Activated CD8-positive, alpha-beta T cell treated with anti-CD3 and anti-CD28 coated beads for 36 hours (primary cell): ENCODE measurements at regions of chr5 and their contacts with region 1.

Region 1: DNA sequence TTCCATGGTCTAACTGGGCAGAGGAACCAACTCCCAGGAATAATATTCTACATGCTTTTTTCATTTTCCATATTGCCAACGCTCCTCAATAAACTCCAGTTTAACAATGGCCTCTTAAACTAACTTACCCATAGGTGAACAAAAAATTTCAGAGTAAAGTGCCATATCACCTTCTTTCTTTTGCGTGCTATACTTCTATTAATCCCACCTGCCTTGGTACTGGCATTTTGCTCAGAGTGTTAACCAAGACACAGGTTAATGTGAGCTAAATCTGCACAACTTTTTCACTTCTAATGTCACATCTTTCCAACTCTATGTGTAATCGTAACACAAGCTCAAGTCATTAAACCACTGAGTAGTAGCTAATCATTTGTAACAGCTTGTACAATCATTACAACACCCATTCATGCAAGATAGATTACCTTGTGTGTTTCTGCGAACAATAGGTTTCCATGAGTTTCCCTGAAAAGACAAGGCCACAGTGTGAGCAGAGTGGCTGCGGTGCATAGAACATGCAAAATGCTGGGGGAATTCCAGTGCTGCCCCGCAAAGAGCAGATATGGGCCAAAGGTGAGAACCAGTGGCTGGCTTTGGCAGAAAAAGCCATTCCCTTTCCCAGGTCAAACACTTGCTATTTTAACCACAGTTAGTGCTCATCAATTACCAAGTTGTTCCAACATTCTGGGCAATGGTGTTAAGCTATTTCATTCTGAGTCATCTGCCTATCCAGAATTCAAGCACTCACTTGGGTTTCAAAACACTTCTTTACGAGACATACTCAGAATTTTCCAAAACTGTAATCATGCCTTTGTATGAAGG is 42.8 kb downstream of the TIMD4 start:
- DNase-seq: peak; percentile 90
- ATAC-seq: peak; percentile 77
- H3K4me3 Mint-ChIP-seq: peak overlapping the region; percentile 63
- H3K27ac Mint-ChIP-seq: peak overlapping the region; percentile 88
- H3K4me1 Mint-ChIP-seq: peaks cover 58% of the 10 kb centered on the region
- H3K27me3 Mint-ChIP-seq: no peaks in the 10 kb centered on the region
- CTCF ChIP-seq: no peak

Region 2: GRCh38 chr5:157108976-157109375 is 188.7 kb after region 1 on chr5 and contains the start of gene HAVCR2:
- CTCF ChIA-PET with region 1: no interaction called
- POLR2A ChIA-PET with region 1: no interaction called
- intact Hi-C with region 1: loop called (anchors 5 kb)
- DNase-seq: peak; percentile 88
- ATAC-seq: peak; percentile 91
- H3K4me3 Mint-ChIP-seq: peak within 1 kb of the TSS; percentile 78
- H3K27ac Mint-ChIP-seq: peak within 1 kb of the TSS; percentile 94
- H3K4me1 Mint-ChIP-seq: peaks cover 55% of the 10 kb centered on the region
- H3K27me3 Mint-ChIP-seq: no peaks in the 10 kb centered on the region
- CTCF ChIP-seq: no peak
- total RNA-seq, gene HAVCR2: 28.7 to 34.6 TPM